GM12878 (cell line): ENCODE measurements at regions of chr16 and their contacts with region 1.

Region 1: DNA sequence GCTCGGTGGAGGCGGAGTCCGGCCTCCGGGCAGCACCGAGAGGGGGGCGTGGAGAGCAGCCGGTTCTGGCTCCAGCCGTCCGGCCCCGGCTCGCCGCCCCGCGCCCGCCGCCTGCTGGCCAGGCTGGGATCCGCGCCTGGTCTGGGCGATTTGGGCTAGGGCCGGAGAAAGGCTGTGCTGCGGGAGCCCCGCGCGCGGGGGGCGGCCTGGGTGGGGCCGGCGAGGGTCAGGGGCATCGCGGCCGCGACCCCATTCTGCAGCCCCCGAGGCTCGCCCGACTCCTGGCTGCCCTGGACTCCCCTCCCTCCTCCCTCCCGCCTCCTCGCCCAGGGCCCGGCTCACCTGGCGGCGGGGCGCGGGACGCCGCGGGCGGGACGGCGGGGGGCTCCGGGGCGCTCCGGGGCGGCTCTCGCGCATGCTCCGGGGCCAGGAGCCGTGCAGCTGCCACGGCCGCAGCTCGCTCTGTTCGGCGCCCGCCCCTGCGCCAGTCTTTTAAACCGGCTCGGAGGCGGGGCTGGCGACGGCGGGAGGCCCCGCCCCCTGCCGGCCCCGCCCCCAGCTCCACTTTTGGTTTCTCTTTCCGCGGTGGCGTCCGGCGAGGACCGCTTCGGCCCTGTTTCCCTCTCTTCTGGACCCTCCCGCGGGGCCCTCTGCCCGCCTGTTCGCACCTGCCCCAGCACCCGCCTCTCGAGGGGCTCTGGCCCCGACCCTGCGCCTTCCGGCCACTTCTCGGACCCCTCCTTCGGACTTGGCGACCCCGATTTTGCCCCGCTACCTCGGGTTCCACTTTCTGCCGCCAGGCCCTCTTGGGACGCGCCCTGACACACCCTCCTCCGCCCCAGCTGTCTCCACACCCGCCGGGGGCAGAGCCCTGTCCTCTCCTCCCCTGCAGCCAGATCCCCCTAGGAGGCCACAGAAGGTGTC is at the start of gene SOCS1:
- DNase-seq: no peak
- ATAC-seq: peak; percentile 60
- H3K4me3 ChIP-seq: peak within 1 kb of the TSS; percentile 91
- H3K27ac ChIP-seq: peak within 1 kb of the TSS; percentile 91
- H3K4me1 ChIP-seq: peaks cover 43% of the 10 kb centered on the region
- H3K27me3 ChIP-seq: no peaks in the 10 kb centered on the region
- CTCF ChIP-seq: peak; percentile 72 to 79 (median 76); a peak in 5 of 6 replicates
- EP300 ChIP-seq: 0 out of 4 replicates have a peak, but pooled peaks of 1 of the 2 experiments have one; percentile 7
- POLR2A ChIP-seq: peak; percentile 92
- RAD21 ChIP-seq: peak; percentile 68
- polyA plus RNA-seq, gene SOCS1: 0.42 to 1.2 TPM

Region 2: DNA sequence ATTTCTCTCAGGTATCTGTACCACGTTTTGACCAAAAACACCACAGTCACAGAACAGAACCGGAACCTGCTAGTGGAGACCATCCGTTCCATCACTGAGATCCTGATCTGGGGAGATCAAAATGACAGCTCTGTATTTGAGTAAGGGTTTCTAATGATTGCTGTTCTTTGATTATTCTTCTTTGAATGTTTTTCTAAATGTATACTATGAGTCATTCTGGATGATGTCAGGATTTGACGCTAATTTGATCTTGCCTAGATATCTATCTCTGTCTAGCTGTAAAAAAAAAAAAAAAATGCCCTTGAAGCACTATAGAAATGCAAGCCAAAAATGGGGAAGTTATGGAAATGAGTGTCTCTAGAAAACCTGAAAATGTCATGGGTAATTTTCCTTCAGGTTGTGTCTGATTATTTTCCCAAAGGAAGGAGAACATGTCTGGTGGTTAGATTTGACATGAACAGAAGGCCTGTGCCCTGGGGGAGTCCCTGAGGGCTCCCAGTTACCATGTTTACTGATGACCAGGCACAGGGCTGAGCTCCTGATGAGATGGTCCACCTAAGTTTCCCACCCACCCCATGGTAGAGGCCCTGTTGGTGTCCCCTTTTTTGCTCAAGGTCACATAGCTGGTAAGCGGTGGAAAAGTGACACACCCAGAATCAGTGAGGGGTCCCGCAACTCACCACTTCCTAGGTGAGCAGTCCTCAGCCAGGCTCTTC is 298.1 kb before region 1 on chr16:
- CTCF ChIA-PET with region 1: interaction called, 12 read pairs
- POLR2A ChIA-PET with region 1: interaction called, 3 read pairs
- RAD21 ChIA-PET with region 1: interaction called, 91 read pairs
- SMC1A ChIA-PET with region 1: interaction called, 6 read pairs
- in situ Hi-C with region 1: no loop called
- intact Hi-C with region 1: no loop called
- DNase-seq: no peak
- ATAC-seq: peak; percentile 75
- H3K4me3 ChIP-seq: no peak overlapping the region
- H3K27ac ChIP-seq: peak overlapping the region; percentile 70
- H3K4me1 ChIP-seq: peaks cover 34% of the 10 kb centered on the region
- H3K27me3 ChIP-seq: no peaks in the 10 kb centered on the region
- CTCF ChIP-seq: no peak
- EP300 ChIP-seq: peak; percentile 30 to 47; a peak in 2 of 4 replicates
- POLR2A ChIP-seq: no peak
- RAD21 ChIP-seq: no peak

Region 3: DNA sequence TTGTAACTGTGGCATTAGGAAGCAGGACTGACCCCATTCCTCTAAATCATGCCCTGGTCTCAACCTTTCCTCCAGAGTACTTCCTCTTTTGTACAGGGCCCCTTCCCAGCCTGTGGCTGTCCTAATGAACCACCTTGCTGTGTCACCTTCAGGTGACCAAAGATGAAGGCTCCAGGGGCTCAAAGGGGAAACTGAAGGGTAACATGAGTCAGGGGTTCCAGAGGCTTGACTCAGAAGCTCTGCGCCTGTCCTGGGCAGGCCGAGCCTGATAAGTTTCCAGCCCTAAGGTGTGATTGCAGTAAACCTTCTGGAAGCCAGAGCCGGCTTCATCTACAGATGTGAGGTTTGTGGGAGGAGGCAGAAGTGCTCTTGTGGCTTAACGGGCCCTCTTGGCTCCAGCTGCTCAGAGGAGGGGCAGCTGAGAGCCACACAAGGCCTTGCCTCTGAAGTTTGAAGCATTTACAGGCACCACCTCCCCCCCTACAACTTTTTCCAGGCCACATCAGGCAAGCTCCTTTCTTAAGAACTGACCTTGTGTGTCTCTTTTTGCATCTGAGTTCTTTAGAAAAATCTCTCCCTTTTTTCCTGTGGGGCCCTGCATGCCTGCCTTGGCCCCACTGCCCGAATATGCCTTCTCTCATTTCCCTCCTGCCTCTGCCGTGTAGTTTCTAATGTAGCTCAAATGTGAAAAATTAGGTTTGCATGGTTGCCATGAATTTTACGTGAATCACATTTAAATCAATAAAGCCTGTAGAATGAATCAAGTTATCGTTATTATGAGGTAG is 161.7 kb before region 1 on chr16:
- CTCF ChIA-PET with region 1: interaction called, 4 read pairs
- POLR2A ChIA-PET with region 1: interaction called, 7 read pairs
- RAD21 ChIA-PET with region 1: interaction called, 16 read pairs
- SMC1A ChIA-PET with region 1: interaction called, 3 read pairs
- in situ Hi-C with region 1: no loop called
- intact Hi-C with region 1: no loop called
- DNase-seq: peak; percentile 53
- ATAC-seq: peak; percentile 86
- H3K4me3 ChIP-seq: 0 out of 2 replicates have a peak overlapping the region, but pooled peaks have one; percentile 18
- H3K27ac ChIP-seq: peak overlapping the region; percentile 80
- H3K4me1 ChIP-seq: peaks cover 54% of the 10 kb centered on the region
- H3K27me3 ChIP-seq: no peaks in the 10 kb centered on the region
- CTCF ChIP-seq: no peak
- EP300 ChIP-seq: 0 out of 4 replicates have a peak, but pooled peaks of 1 of the 2 experiments have one; percentile 39
- POLR2A ChIP-seq: no peak
- RAD21 ChIP-seq: no peak

Region 4: GRCh38 chr16:11190588-11191560 is 65.1 kb before region 1 on chr16:
- CTCF ChIA-PET with region 1: interaction called, 5 read pairs
- POLR2A ChIA-PET with region 1: interaction called, 6 read pairs
- RAD21 ChIA-PET with region 1: interaction called, 10 read pairs
- SMC1A ChIA-PET with region 1: no interaction called
- in situ Hi-C with region 1: no loop called
- intact Hi-C with region 1: no loop called
- DNase-seq: no peak
- ATAC-seq: peak; percentile 41; the same call in 2 of the 3 replicates
- H3K4me3 ChIP-seq: no peak overlapping the region
- H3K27ac ChIP-seq: no peak overlapping the region
- H3K4me1 ChIP-seq: peaks cover 13% of the 10 kb centered on the region
- H3K27me3 ChIP-seq: no peaks in the 10 kb centered on the region
- CTCF ChIP-seq: no peak
- EP300 ChIP-seq: no peak
- POLR2A ChIP-seq: no peak
- RAD21 ChIP-seq: no peak

Region 5: DNA sequence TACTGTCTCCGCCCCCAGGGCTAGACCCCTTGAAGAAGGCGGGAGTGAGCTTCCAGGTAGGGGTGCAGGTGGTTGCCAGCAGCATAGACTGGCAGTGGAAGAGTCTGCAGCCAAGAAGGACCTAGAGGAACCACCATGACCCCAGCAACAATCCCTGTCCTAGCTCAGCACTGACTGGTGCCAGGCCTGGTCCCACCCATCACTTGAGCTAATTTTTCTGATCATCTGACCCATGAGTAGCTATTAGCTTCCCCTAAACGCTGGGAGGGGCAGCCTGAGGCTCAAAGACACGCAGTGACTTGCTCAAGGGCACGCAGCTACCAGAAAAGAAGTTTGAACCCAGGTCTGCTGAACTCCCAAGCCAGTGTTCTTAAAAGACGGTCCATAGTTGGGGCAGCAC is 16.5 kb after region 1 on chr16:
- CTCF ChIA-PET with region 1: no interaction called
- POLR2A ChIA-PET with region 1: interaction called, 3 read pairs
- RAD21 ChIA-PET with region 1: no interaction called
- SMC1A ChIA-PET with region 1: interaction called, 13 read pairs
- in situ Hi-C with region 1: no loop called
- intact Hi-C with region 1: no loop called
- DNase-seq: no peak
- ATAC-seq: no peak
- H3K4me3 ChIP-seq: no peak overlapping the region
- H3K27ac ChIP-seq: no peak overlapping the region
- H3K4me1 ChIP-seq: no peaks in the 10 kb centered on the region
- H3K27me3 ChIP-seq: no peaks in the 10 kb centered on the region
- CTCF ChIP-seq: no peak
- EP300 ChIP-seq: no peak
- POLR2A ChIP-seq: no peak
- RAD21 ChIP-seq: no peak

Region 6: GRCh38 chr16:11328172-11329070 is 72.4 kb after region 1 on chr16:
- CTCF ChIA-PET with region 1: interaction called, 4 read pairs
- POLR2A ChIA-PET with region 1: interaction called, 5 read pairs
- RAD21 ChIA-PET with region 1: interaction called, 7 read pairs
- SMC1A ChIA-PET with region 1: interaction called, 10 read pairs
- in situ Hi-C with region 1: no loop called
- intact Hi-C with region 1: loop called (anchors 1 kb)
- DNase-seq: peak; percentile 95
- ATAC-seq: peak; percentile 84
- H3K4me3 ChIP-seq: peak overlapping the region; percentile 56
- H3K27ac ChIP-seq: peak overlapping the region; percentile 89
- H3K4me1 ChIP-seq: peaks cover 48% of the 10 kb centered on the region
- H3K27me3 ChIP-seq: no peaks in the 10 kb centered on the region
- CTCF ChIP-seq: peak in 2 of 3 experiments; percentile 4 to 6; a peak in 1 of 6 replicates
- EP300 ChIP-seq: peak; percentile 59 to 93
- POLR2A ChIP-seq: peak; percentile 78
- RAD21 ChIP-seq: peak; percentile 23; the same call in 1 of the 2 replicates

Region 7: GRCh38 chr16:11379420-11379819 is 123.4 kb after region 1 on chr16:
- CTCF ChIA-PET with region 1: interaction called, 12 read pairs
- POLR2A ChIA-PET with region 1: interaction called, 7 read pairs
- RAD21 ChIA-PET with region 1: interaction called, 10 read pairs
- SMC1A ChIA-PET with region 1: interaction called, 3 read pairs
- in situ Hi-C with region 1: no loop called
- intact Hi-C with region 1: no loop called
- DNase-seq: peak; percentile 71
- ATAC-seq: peak; percentile 98
- H3K4me3 ChIP-seq: no peak overlapping the region
- H3K27ac ChIP-seq: peak overlapping the region; percentile 41
- H3K4me1 ChIP-seq: peaks cover 12% of the 10 kb centered on the region
- H3K27me3 ChIP-seq: no peaks in the 10 kb centered on the region
- CTCF ChIP-seq: no peak
- EP300 ChIP-seq: peak; percentile 80 to 88
- POLR2A ChIP-seq: 0 out of 2 replicates have a peak, but pooled peaks have one; percentile 30
- RAD21 ChIP-seq: 0 out of 2 replicates have a peak, but pooled peaks have one; percentile 12